Esophagus muscularis mucosa (tissue), 4 donors: ENCODE measurements at regions of chr10 and their contacts with region 1.

Region 1: DNA sequence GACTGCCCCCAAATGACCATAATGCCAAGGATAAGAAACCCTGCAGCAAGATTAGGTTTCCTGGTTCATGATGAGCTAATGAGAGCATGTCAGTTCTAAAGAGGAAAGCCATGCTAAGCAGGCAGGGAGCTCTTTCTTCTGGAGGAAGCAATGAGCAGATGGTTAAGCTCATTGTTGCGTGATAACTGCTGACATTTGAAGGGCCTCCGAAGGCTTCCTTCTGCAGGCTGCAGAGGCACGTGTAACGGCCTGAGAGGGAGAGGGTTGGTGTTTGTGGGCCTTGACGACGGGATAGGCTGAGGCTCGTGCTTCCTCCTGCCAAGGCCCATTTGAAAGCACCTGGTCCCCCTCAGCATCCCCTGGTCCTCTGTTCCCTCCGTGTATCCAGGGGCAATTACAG is 63.5 kb upstream of the BTBD16 start:
- DNase-seq: no peak
- H3K4me3 ChIP-seq: no peak overlapping the region
- H3K27ac ChIP-seq: peak overlapping the region in 2 of 4 donors; percentile 17 to 36
- H3K4me1 ChIP-seq: peaks cover 5 to 46% (median 31%) of the 10 kb centered on the region in 4 donors
- H3K27me3 ChIP-seq: no peaks in the 10 kb centered on the region
- CTCF ChIP-seq: no peak
- EP300 ChIP-seq: no peak
- POLR2A ChIP-seq: no peak

Region 2: DNA sequence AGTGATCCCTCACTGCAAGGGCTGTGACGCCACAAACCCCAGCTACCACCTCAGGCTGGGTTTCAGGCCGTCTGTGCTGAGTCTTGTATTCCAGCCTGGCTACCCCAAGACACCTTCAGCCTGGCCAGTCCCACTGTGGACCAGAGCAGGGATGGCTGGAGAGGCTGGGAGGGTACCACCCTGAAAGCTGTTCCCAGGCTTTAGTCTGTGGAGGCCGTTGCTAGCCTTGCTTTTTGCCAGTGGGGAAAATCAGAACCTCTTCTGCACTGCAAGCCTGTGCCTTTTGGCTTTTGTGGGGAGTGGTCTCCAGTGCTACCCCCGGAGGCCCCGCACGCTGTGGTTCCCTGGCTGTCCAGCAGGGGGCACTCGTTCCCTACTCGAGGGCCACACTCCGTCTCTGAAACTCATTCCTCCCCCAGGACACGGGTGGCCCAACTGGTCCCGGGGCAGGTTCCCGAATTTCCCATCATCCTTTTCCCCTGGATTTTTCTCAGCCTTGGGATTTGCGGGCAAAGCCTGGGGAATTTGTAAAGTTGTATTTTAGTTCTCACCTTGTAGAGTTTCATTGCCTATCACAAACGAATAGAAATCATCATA is 64.9 kb before region 1 on chr10:
- intact Hi-C with region 1: loop called (anchors 5 kb)
- DNase-seq: no peak
- H3K4me3 ChIP-seq: no peak overlapping the region
- H3K27ac ChIP-seq: peak overlapping the region; percentile 80 to 88 (median 86)
- H3K4me1 ChIP-seq: peaks cover 70 to 78% (median 72%) of the 10 kb centered on the region in 4 donors
- H3K27me3 ChIP-seq: no peaks in the 10 kb centered on the region
- CTCF ChIP-seq: peak; percentile 97 to 98 (median 98)
- EP300 ChIP-seq: no peak
- POLR2A ChIP-seq: no peak

Region 3: DNA sequence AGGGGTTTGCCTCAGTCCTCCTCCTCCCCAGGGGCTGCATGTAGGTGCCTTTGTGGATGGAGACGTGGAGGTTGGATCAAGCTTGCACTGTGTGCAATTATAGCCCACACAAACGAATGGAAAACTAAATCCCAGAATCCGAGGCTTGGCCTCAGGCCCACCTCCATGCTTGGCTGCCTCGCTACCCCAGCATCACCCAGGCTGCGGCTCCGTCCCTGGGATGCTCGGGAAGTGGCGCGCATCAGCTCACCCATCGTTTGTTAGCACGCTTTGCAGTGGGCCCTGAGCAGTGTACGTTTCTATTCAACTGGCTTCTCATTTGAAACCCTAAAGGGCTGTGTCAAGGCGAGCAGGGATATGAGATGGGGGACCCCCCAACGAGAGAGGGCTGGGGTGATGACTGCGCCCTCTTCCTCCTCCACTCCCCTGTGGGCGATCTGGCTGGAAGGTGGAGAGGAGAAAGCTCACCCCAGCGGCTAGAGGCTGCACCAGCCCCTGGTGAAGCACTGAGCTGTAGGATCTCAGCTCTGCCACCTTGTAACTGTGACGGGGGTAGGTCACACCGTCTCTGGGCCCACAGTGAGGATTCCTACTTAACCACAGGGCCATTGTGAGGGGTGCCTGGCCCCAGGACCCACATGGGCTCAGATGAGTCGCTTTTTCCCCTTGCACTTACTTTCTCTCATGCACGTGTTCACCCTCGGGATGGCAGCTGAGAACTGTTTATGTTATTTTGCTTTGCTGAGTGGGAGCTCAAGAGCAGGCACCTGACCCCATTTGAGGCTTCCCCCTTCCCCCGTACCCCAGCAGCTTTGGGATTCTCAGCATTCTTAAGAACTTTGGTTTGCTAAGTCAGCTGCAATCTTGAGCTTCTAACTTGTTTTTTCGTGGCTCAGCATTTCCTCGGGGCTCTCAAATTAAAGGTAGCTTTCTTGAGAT is 50.8 kb after region 1 on chr10:
- intact Hi-C with region 1: no loop called
- DNase-seq: no peak
- H3K4me3 ChIP-seq: no peak overlapping the region
- H3K27ac ChIP-seq: peak overlapping the region; percentile 22 to 66 (median 56)
- H3K4me1 ChIP-seq: peaks cover 4 to 17% (median 13%) of the 10 kb centered on the region in 4 donors
- H3K27me3 ChIP-seq: no peaks in the 10 kb centered on the region
- CTCF ChIP-seq: no peak
- EP300 ChIP-seq: no peak
- POLR2A ChIP-seq: no peak